ENCODE measurements at regions of chr11 and their contacts with region 1.

Region 1: DNA sequence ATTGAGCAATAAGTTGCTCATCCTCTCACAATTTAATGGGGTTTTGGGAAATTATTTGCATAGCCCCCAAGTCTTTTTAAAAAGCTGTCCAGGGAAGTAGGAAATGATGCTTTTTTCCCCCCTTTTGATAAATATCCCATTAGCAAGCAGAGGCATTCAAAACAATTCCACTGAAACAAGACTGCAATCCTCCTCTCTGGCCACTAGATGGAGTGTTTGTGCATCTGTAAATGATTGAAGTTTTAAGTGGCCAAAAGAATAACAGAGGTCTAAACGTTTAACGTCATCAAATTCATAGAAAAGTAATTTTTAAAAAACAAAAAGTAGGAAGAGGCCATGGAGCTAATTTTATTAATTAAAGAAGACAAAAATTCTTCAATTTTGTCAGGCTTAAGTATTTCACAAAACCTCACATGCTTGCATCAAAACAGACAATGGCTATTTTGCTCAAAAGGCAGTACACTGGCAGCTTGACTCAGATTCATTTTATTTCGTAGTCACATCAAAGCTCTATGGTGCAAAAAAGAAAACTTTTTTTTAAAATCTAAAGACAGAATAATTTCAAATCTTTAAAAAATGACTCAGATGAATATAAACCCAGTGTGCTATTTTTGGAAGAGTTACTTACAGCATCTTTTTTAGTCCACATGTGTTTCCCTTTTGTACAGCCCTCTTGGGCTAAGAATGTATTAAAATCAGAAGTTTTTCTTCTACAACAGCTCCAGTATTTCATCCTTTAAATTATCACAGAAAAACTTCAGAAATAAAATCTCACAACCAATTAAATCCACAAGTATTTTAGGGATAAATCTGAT is 17.8 kb downstream of the CHORDC1 start:
- DNase-seq: peak; percentile 64
- H3K4me3 Mint-ChIP-seq: no peak overlapping the region
- H3K27ac Mint-ChIP-seq: no peak overlapping the region
- H3K4me1 Mint-ChIP-seq: peaks cover 25% of the 10 kb centered on the region
- H3K27me3 Mint-ChIP-seq: no peaks in the 10 kb centered on the region
- CTCF ChIP-seq: peak; percentile 57

Region 2: GRCh38 chr11:90222459-90223247 is 17.6 kb after region 1 on chr11 and contains the start of gene CHORDC1:
- CTCF ChIA-PET with region 1: interaction called, 13 read pairs
- POLR2A ChIA-PET with region 1: interaction called, 7 read pairs
- intact Hi-C with region 1: no loop called
- DNase-seq: peak; percentile 89
- H3K4me3 Mint-ChIP-seq: peak within 1 kb of the TSS; percentile 96
- H3K27ac Mint-ChIP-seq: peak within 1 kb of the TSS; percentile 39
- H3K4me1 Mint-ChIP-seq: peaks cover 31% of the 10 kb centered on the region
- H3K27me3 Mint-ChIP-seq: no peaks in the 10 kb centered on the region
- CTCF ChIP-seq: no peak
- total RNA-seq, gene CHORDC1: 47.7 and 62.0 TPM in 2 replicates

Region 3: GRCh38 chr11:90332415-90332814 is 127.4 kb after region 1 on chr11:
- CTCF ChIA-PET with region 1: interaction called, 4 read pairs
- POLR2A ChIA-PET with region 1: no interaction called
- intact Hi-C with region 1: loop called (anchors 5 kb)
- DNase-seq: peak; percentile 24
- H3K4me3 Mint-ChIP-seq: no peak overlapping the region
- H3K27ac Mint-ChIP-seq: no peak overlapping the region
- H3K4me1 Mint-ChIP-seq: no peaks in the 10 kb centered on the region
- H3K27me3 Mint-ChIP-seq: no peaks in the 10 kb centered on the region
- CTCF ChIP-seq: no peak